Heart right ventricle (tissue), 16 donors: ENCODE measurements at regions of chr5 and their contacts with region 1.

Region 1: GRCh38 chr5:164013077-164013670 is 507.8 kb downstream of the MAT2B start:
- DNase-seq: peak in 1 of 2 donors; percentile 44
- ATAC-seq: no peak
- H3K4me3 ChIP-seq: no peak overlapping the region
- H3K27ac ChIP-seq: no peak overlapping the region
- H3K4me1 ChIP-seq: no peaks in the 10 kb centered on the region
- H3K27me3 ChIP-seq: peaks cover 0 to 11% (median 0%) of the 10 kb centered on the region in 7 donors
- CTCF ChIP-seq: peak; percentile 29 to 73 (median 62)

Region 2: DNA sequence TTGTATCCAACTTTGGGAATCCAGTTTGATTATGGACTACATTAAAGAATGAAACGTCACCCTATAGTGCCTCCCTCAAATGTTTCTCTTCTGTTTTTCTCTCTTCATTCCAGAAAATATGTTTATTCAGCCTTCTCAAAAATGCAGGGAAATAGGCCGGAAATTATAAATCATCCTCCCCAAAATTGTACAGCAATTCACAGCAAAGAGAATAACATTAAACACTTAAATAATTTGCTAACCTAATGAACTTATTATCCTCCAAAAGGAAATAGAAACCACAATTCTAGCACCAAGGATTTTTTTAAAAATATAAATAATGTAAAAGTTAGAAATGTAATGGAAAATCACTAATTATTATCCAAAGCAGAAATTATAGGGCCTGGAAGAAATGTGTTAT is 691.7 kb before region 1 on chr5:
- intact Hi-C with region 1: no loop called
- DNase-seq: no peak
- ATAC-seq: no peak
- H3K4me3 ChIP-seq: no peak overlapping the region
- H3K27ac ChIP-seq: no peak overlapping the region
- H3K4me1 ChIP-seq: no peaks in the 10 kb centered on the region
- H3K27me3 ChIP-seq: peaks cover 0 to 7% (median 0%) of the 10 kb centered on the region in 7 donors
- CTCF ChIP-seq: no peak

Region 3: DNA sequence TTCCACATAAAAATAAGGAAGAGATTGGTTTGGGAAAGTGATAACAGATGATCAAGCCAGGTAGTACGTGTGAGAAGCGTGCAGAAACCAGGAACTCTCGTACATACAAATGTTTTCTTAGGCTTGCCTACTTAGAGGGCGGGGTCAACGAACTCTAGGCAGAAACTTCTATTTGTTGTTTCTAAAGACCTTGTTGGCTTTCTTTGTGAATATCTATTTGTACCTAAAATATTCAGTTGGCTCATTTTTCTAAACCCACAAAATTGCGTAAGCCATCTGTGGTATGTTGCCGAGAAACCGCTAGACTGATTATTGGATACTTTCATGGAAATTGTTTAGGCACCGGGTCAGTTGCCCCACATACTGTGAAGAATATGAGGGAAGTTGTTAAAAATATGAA is 49.3 kb before region 1 on chr5:
- intact Hi-C with region 1: no loop called
- DNase-seq: no peak
- ATAC-seq: no peak
- H3K4me3 ChIP-seq: no peak overlapping the region
- H3K27ac ChIP-seq: no peak overlapping the region
- H3K4me1 ChIP-seq: peaks cover 0 to 12% (median 0%) of the 10 kb centered on the region in 9 donors
- H3K27me3 ChIP-seq: no peaks in the 10 kb centered on the region
- CTCF ChIP-seq: no peak

Region 4: DNA sequence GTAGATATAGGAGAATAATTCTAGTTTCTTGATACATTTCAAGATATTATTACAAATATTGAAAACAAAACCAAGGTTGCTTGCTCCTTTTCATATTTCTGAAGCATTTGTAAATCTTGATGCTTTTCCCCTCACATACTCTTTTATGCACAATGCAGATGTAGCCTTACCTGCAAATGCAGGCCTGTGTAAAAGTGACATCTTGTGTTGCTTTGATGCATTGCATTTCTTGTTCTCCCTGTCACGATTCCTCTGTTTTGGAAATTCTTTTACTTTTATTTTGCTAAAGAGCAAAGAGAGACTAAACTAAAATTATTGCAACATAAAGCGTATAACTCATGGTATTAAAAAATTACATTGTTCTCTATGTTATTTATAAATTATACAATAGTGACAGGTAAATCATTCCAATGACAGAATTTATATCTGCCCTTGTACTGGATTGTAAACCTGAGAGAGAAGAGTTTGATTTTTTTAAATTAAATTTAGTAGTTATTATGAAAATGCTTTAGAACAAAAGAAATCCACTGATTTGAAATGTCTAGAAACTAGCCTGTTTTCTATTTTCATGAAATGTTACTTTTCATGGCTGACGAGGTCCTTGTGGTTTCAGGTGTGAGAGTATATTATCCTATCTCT is 462.3 kb after region 1 on chr5:
- intact Hi-C with region 1: loop called in 1 of 10 experiments (anchors 10 kb)
- DNase-seq: no peak
- ATAC-seq: no peak
- H3K4me3 ChIP-seq: no peak overlapping the region
- H3K27ac ChIP-seq: no peak overlapping the region
- H3K4me1 ChIP-seq: no peaks in the 10 kb centered on the region
- H3K27me3 ChIP-seq: no peaks in the 10 kb centered on the region
- CTCF ChIP-seq: peak; percentile 16 to 60 (median 46)

Region 5: GRCh38 chr5:164504141-164504772 is 491.1 kb after region 1 on chr5:
- intact Hi-C with region 1: loop called in 9 of 10 experiments (anchors 1 to 10 kb)
- DNase-seq: peak in 1 of 2 donors; percentile 34
- ATAC-seq: no peak
- H3K4me3 ChIP-seq: no peak overlapping the region
- H3K27ac ChIP-seq: no peak overlapping the region
- H3K4me1 ChIP-seq: no peaks in the 10 kb centered on the region
- H3K27me3 ChIP-seq: peaks cover 0 to 13% (median 0%) of the 10 kb centered on the region in 7 donors
- CTCF ChIP-seq: peak; percentile 46 to 78 (median 74)

Region 6: GRCh38 chr5:165209086-165209727 is 1196.0 kb after region 1 on chr5:
- intact Hi-C with region 1: loop called in 4 of 10 experiments (anchors 5 to 10 kb)
- DNase-seq: no peak
- ATAC-seq: no peak
- H3K4me3 ChIP-seq: no peak overlapping the region
- H3K27ac ChIP-seq: no peak overlapping the region
- H3K4me1 ChIP-seq: no peaks in the 10 kb centered on the region
- H3K27me3 ChIP-seq: peaks cover 0 to 5% (median 0%) of the 10 kb centered on the region in 7 donors
- CTCF ChIP-seq: peak in 7 of 9 donors; percentile 57 to 72 (median 65)